Left ventricle myocardium inferior (tissue), 1 donor: ENCODE measurements at regions of chr10 and their contacts with region 1.

Region 1: DNA sequence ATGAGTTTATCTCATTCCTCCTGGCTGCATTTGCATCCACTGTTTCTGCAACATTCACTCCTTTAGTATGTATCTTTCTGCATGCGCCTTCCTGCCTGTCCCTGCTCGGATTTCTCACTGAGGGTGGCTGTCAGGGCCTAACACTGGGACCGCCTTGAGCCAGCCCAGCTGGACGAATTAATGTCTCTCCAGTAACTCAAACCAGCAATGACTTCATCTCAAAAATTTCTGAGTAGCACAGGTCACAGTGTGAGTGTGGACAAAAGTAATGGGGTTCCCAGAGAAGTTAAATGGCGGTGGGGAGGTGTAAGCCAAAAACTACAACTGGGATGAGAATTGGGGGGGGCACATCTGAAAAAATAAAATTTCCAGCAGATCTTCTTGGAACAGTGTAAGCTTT is 444.0 kb upstream of the MGMT start:
- DNase-seq: peak; percentile 77
- H3K4me3 ChIP-seq: no peak overlapping the region
- H3K27ac ChIP-seq: peak overlapping the region; percentile 76
- H3K4me1 ChIP-seq: peaks cover 21% of the 10 kb centered on the region
- H3K27me3 ChIP-seq: peaks cover 41% of the 10 kb centered on the region
- CTCF ChIP-seq: no peak

Region 2: DNA sequence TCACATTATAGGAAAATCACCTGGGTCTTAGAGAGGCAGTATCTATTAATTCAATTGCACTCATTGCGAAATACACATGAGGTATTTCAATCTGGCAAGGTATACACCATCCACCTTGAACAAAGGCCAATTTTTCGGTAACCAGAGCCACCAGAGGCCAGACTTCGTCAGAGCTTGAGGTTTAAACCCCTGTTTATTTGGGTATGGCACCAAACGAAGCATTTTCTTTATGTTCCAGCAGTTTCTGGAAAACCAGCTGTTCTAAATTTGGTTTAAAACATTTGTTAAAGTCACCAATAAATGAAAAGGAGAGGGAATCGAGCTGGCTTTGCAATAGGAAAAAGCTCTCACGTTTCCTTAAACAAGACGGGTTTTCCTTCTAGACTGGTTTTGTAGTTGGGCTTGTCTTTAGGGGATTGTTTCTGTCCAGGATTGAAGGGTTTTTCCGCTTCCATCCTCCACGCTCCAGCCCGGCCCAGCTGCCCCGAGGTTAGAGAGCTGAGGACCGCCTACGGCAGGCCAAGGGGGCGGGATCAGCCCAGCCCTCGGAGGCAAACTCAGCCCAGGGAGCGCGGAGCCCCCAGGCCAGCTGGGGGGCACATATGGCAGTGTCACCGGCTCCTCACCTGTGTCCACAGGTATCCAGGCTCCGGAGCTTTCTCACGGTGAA is 95.5 kb before region 1 on chr10:
- intact Hi-C with region 1: loop called (anchors 10 kb)
- DNase-seq: peak; percentile 75
- H3K4me3 ChIP-seq: peak overlapping the region; percentile 9
- H3K27ac ChIP-seq: peak overlapping the region; percentile 79
- H3K4me1 ChIP-seq: peaks cover 16% of the 10 kb centered on the region
- H3K27me3 ChIP-seq: peaks cover 67% of the 10 kb centered on the region
- CTCF ChIP-seq: no peak

Region 3: GRCh38 chr10:129288999-129289398 is 265.9 kb after region 1 on chr10:
- intact Hi-C with region 1: no loop called
- DNase-seq: no peak
- H3K4me3 ChIP-seq: no peak overlapping the region
- H3K27ac ChIP-seq: no peak overlapping the region
- H3K4me1 ChIP-seq: no peaks in the 10 kb centered on the region
- H3K27me3 ChIP-seq: no peaks in the 10 kb centered on the region
- CTCF ChIP-seq: no peak

Region 4: GRCh38 chr10:129971381-129972144 is 948.5 kb after region 1 on chr10:
- intact Hi-C with region 1: loop called (anchors 10 kb)
- DNase-seq: peak; percentile 60
- H3K4me3 ChIP-seq: peak overlapping the region; percentile 69
- H3K27ac ChIP-seq: no peak overlapping the region
- H3K4me1 ChIP-seq: peaks cover 57% of the 10 kb centered on the region
- H3K27me3 ChIP-seq: peaks cover 100% of the 10 kb centered on the region
- CTCF ChIP-seq: peak; percentile 80